GM18951 (cell line): ENCODE measurements at regions of chr6 and their contacts with region 1.

Region 1: DNA sequence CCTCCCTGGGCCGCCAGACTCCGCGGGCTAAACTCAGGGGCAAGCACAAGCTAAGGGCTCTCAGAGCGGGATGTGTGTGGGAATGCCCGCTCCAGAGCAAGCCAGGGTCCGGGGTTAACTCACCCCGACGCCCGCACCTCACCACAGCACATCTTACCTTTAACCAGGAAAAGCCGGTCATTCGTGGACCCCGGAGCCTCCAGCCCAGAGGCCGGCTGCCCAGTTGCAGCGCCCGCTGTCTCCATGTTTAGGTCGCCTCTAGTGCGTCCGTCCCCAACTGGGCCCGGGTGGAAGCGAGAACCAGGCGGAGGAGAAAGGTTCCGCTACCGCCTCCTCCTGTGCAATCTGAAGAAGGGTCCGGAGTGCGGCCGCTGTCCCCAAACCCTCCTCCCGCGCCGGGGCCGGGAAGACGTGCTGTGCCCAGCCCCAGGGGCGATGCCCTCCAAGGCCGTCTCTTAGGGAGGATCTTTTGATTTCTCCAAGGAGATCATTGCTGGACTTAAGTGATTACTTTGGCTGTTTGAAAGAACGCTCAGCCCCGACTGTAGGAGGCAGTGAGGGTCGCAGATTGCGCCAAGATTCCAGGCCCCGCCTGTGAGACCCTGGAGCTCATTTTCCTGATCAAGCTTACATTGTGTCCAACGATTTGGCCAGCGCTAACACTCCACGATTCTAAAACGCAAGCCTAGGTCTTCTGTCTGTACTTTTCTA is at the start of gene TMEM242:
- POLR2A ChIP-seq: peak; percentile 92

Region 2: DNA sequence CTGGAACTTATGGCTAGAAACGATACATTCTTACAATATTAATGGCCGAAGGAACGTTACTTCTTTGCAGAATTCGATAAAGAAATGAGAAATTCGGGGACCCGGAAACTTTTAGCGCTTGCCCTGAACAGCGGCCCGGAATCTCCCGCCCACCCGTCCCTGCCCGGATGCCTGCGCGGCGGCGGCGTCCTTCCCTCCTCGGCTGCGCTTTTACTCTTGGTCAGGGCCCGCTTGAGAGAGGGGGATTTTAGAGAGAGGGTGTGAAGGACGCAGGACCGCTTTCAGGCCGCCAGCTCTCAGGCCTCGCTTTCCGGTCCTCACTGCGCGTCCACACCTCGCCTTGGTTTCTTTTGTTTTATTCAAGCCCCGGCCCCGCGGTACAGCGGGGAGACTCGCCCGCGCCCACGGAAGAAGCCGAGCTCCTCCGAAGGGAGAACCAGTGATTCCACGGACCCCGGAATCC is 302.5 kb before region 1 on chr6:
- in situ Hi-C with region 1: no loop called
- POLR2A ChIP-seq: no peak

Region 3: DNA sequence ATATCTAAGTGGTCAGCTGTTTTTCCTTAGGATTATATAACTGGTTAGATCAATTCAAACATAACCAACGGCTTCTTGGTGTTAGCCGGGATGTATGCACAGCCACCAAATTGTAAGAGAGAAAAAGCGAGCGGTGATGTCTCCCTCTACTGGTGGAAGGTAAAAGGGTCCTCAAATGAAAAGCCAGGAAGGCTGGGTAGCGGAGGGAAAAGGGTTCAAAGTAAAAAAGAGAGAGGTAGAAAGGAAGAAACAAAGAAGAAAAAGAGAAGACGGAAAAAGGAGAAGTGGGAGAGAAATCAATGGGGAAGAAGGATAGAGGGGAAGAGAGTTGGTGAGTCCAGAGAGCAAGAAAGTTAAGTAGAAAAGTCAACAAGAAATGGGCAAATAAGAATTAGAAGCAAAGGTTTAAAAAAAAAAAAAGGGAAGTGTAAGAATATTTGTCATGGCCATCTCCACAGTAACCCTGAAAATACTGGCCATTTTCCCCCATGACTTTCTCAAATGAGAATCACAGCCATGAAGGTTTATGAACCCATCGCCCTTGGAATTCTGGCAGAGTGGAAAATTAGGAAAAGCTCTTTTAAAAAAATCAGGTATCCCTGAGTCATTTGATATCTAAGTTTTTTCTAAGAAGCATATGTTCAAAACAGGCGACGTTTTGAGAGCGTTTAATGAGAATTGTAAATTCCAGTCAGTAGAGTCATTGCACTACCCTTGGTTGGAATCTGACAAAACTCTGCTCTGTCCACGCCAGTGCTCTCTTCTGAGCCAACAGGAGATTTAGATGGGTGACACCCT is 344.0 kb after region 1 on chr6:
- in situ Hi-C with region 1: loop called (anchors 25 kb)
- POLR2A ChIP-seq: no peak

Region 4: DNA sequence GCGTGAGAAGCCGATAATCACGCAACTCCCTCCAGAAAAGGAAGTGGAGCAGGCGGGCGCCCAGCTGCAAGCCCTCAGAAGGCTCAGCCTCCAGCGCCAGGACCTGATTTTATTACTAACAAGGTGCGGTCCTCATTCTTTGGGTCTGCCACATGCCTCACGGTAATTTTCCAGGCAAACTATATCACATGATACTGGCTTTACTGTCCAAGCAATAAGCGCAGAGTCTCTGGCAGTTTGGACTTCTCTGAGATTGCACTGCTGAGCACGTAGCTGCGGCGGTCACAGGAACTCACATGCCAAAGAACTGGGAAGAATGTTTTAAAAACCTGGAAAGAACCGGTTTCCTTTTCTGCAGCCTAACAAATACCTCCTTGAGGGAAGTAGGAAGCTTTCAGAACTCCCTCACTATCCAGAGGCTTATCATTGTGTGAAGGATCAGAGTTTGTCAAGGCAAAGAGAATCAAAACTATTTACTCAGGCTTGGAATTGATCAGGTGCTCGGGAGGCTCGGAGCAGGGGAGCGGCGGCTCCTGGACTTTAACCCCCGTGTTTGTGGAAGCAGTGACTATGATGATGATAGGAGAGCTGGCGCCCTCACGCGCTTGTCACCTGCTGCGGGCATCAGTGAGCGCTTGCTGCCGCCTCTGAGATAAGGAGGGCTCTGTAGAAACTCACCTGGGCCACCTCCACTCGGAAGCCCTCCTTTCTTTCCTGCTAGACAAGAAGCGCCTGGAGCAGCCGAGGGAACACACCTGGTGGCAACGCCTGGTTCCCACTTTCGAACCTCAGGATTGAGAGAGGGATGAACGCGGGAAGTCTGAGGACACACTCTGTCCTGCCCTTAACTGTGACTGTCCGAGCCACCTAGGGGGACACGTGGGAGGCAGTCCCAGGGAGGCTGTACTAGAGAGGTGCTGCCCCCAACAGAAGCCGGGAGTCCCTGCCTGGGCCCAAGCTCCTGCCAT is 631.0 kb after region 1 on chr6:
- in situ Hi-C with region 1: loop called (anchors 25 kb)
- POLR2A ChIP-seq: no peak